ENCODE measurements at regions of chr5 and their contacts with region 1.

Region 1: GRCh38 chr5:16626663-16627264 is 10.0 kb upstream of the RETREG1 start:
- DNase-seq: peak in 5 of 10 donors; percentile 23 to 68 (median 45)
- ATAC-seq: peak; percentile 54 to 56
- H3K4me3 Mint-ChIP-seq: peak overlapping the region; percentile 21 to 82 (median 42)
- H3K27ac Mint-ChIP-seq: peak overlapping the region; percentile 71 to 98 (median 94)
- H3K4me1 Mint-ChIP-seq: peaks cover 35 to 63% (median 59%) of the 10 kb centered on the region in 4 donors
- H3K27me3 Mint-ChIP-seq: no peaks in the 10 kb centered on the region

Region 2: GRCh38 chr5:15695215-15695731 is 931.5 kb before region 1 on chr5:
- POLR2A ChIA-PET with region 1: no interaction called
- DNase-seq: no peak
- ATAC-seq: no peak
- H3K4me3 Mint-ChIP-seq: no peak overlapping the region
- H3K27ac Mint-ChIP-seq: no peak overlapping the region
- H3K4me1 Mint-ChIP-seq: no peaks in the 10 kb centered on the region
- H3K27me3 Mint-ChIP-seq: no peaks in the 10 kb centered on the region

Region 3: GRCh38 chr5:16642862-16643261 is 16.1 kb after region 1 on chr5:
- POLR2A ChIA-PET with region 1: interaction called, 16 read pairs
- DNase-seq: no peak
- ATAC-seq: no peak
- H3K4me3 Mint-ChIP-seq: no peak overlapping the region
- H3K27ac Mint-ChIP-seq: peak overlapping the region in 4 of 10 donors; percentile 14 to 67 (median 37)
- H3K4me1 Mint-ChIP-seq: peaks cover 10 to 16% (median 12%) of the 10 kb centered on the region in 4 donors
- H3K27me3 Mint-ChIP-seq: no peaks in the 10 kb centered on the region

Region 4: DNA sequence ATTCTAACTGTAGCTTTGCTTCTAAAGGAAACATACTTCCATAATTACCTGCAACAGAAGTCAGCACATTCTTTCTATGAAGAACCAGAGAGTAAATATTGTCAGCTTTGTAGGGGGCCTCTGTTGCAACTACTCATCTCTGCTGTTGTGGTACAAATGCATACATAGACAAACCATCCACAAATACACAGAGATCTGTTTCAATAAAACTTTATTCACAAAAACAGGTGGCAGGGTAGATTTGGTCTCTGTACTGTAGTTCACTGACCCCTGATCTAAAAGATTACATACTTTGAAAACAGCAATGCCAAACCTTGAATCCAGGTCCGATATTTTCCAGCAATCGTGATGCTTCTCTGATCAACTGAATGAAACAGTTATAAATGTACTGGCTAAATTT is 34.9 kb after region 1 on chr5:
- POLR2A ChIA-PET with region 1: interaction called, 16 read pairs
- DNase-seq: no peak
- ATAC-seq: no peak
- H3K4me3 Mint-ChIP-seq: no peak overlapping the region
- H3K27ac Mint-ChIP-seq: no peak overlapping the region
- H3K4me1 Mint-ChIP-seq: peaks cover 4 to 14% (median 8%) of the 10 kb centered on the region in 4 donors
- H3K27me3 Mint-ChIP-seq: no peaks in the 10 kb centered on the region

Region 5: DNA sequence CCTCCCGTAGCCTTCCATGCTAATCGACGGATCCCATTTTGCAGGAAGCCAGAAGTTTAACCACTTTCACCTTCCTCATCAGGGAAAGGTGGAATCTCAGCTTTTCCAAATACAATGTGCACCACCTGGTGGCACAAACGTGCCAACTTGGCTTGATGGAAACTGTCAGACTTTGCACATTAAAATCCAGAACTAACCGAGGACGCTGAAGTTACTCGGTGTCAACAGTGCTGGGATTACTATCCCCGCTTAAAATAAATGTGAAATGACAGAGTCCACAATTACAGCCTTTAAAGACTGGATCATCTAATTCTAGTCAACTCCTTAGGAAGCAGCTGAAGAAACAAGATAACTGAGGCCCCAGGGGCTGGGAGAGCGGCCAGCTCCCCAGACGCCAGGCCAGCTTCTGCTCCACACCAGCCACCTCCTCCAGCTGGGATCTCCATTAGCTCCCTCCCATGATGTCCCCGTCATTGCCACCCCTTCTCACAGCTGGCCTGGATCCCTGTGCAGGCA is 40.2 kb after region 1 on chr5:
- POLR2A ChIA-PET with region 1: interaction called, 16 read pairs
- DNase-seq: peak in 9 of 10 donors; percentile 10 to 69 (median 32)
- ATAC-seq: peak in 1 of 2 donors; percentile 65
- H3K4me3 Mint-ChIP-seq: peak overlapping the region in 2 of 10 donors; percentile 52 to 72
- H3K27ac Mint-ChIP-seq: peak overlapping the region in 4 of 10 donors; percentile 72 to 79 (median 79)
- H3K4me1 Mint-ChIP-seq: peaks cover 0 to 14% (median 6%) of the 10 kb centered on the region in 4 donors
- H3K27me3 Mint-ChIP-seq: no peaks in the 10 kb centered on the region